Activated CD4-positive, alpha-beta T cell treated with anti-CD3 and anti-CD28 coated beads, Interleukin-2, amount 10 ng/mL, durations not matched to agents 24 days and 14 days (primary cell): ENCODE measurements at regions of chr1 and their contacts with region 1.

Region 1: DNA sequence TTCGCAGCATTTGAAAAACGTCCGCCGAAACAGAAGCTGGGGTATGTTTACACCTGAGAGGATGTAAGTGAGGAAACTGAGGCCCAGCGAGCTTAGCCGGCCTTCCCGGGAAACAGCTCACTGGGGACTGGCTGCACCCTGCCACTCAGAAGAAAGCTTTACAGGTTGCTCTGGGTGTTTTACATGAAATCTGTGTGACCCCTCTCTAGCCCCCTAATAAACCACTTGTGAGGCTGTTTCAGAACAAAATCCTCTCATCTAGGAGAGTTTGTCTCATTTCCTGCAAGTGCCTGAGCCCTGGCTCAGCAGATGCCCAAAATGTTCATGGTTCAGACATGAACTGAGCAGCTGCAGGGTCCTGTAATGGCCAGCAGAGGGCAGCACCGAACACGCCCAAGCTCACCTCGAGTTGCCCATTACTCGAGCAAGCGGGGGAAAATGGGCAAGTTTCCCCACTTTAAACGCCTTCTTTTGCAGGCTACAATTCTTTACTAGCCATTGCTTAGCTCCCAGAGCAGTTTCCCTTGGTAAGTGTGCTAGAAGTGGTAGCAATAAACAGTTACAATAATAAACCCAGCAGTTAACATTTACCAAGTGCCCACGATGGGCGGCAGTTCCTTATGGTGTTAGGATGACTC is 76.4 kb downstream of the FHAD1 start:
- DNase-seq: peak; percentile 92
- H3K4me3 Mint-ChIP-seq: no peak overlapping the region
- H3K27ac Mint-ChIP-seq: no peak overlapping the region
- H3K4me1 Mint-ChIP-seq: peaks cover 7% of the 10 kb centered on the region
- H3K27me3 Mint-ChIP-seq: peaks cover 38% of the 10 kb centered on the region

Region 2: DNA sequence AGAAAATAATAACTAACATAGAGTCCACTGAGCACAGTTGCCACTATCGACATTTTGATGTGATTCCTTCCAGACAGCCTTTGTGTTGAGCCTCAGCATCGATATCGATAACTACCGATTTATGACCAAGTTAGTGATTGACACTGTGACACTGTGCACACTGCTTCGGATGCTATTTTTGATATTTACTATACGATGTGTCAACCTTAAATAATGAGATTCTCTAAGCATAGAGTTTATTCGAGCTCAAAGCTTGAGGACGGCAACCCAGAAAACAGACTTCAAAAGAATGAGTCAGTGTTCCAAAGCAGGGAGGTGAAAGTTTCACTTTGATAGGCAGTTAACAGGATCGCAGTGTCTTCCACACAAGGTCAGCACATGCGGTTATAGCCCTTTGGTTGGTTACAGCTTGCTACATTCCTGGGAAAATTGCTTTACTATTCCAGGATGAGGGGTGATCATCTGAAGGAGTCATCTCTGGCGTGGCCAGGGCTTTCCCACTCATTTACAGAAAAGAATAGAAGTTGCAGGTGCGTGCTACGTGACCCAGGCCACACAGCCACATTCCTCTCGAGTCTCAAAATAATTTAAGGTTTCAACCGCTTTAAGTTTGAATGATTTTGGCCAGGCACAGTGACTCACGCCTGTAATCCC is 32.6 kb after region 1 on chr1:
- intact Hi-C with region 1: loop called (anchors 5 kb)
- DNase-seq: no peak
- H3K4me3 Mint-ChIP-seq: no peak overlapping the region
- H3K27ac Mint-ChIP-seq: no peak overlapping the region
- H3K4me1 Mint-ChIP-seq: peaks cover 34% of the 10 kb centered on the region
- H3K27me3 Mint-ChIP-seq: peaks cover 17% of the 10 kb centered on the region

Region 3: DNA sequence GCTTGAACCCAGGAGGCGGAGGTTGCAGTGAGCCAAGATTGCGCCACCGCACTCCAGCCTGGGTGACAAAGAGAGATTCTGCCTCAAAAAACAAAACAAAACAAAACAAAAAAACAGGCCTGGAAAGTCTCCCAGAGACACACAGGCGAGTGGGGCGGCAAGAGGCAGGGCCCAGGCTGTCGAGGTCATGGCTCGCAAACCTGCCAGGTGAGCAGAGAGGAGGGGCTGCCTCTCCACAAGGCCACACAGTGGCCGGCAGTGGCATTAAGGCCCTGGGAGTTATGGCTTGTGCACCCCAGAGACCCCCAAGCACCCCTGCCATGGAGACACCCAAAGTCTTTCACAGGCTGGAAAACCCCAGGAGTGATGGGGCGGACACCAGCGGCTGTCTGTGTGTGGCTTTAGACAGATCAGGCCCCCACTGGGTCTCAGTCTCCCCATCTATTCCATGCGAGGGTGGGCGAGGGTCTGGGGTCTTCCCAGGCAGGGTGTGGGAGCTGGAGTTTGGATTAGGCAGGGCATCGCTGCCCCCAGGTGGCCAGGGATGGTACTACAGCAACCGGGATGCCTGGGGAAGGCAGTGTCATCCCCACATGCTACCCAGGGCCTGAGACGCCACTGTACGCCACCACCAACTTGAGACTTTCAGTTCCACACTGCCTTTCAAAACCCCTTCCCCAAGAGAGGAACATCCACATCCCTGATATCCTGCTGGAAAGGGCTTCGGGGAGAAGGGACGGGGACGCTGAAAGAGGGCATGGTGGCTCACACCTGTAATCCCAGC is 107.5 kb after region 1 on chr1:
- intact Hi-C with region 1: loop called (anchors 1 kb)
- DNase-seq: peak; percentile 92
- H3K4me3 Mint-ChIP-seq: no peak overlapping the region
- H3K27ac Mint-ChIP-seq: no peak overlapping the region
- H3K4me1 Mint-ChIP-seq: peaks cover 12% of the 10 kb centered on the region
- H3K27me3 Mint-ChIP-seq: no peaks in the 10 kb centered on the region

Region 4: DNA sequence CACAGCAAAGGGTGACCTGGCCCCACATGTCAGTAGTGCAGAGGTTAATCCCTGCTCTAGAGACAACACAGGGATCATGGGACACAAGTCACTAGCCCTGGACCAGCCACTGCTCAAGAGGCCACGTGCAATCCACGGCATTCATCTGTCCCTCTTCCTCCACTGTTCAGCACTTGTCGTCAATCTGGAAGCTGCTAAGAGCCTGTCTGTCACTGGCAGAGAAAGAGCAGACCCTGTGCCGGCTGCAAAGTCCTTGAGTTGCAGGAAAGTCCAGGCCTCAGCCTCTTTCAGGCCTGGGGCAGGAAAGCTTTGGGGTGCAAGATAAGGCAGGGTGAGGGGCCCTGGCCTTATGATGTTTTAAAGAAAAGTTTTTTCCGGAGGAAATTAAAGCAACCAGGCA is 169.1 kb after region 1 on chr1:
- intact Hi-C with region 1: loop called (anchors 10 kb)
- DNase-seq: no peak
- H3K4me3 Mint-ChIP-seq: no peak overlapping the region
- H3K27ac Mint-ChIP-seq: no peak overlapping the region
- H3K4me1 Mint-ChIP-seq: peaks cover 5% of the 10 kb centered on the region
- H3K27me3 Mint-ChIP-seq: no peaks in the 10 kb centered on the region